Activated T-helper 1 cell treated with anti-CD3 and anti-CD28 coated beads, Interleukin-12 subunit alpha, Interleukin-12 subunit beta, Interleukin-2, Interleukin-4 antibody, amounts not matched to agents 30 ng/mL and 10 ng/mL and 1 ng/mL, durations not matched to agents 14 hours and 24 hours and 36 hours (primary cell): ENCODE measurements at regions of chr4 and their contacts with region 1.

Region 1: GRCh38 chr4:145055533-145056257 is 42.3 kb downstream of the ANAPC10 start:
- DNase-seq: no peak
- H3K4me3 Mint-ChIP-seq: no peak overlapping the region
- H3K27ac Mint-ChIP-seq: no peak overlapping the region
- H3K4me1 Mint-ChIP-seq: peaks cover 19% of the 10 kb centered on the region
- H3K27me3 Mint-ChIP-seq: no peaks in the 10 kb centered on the region

Region 2: DNA sequence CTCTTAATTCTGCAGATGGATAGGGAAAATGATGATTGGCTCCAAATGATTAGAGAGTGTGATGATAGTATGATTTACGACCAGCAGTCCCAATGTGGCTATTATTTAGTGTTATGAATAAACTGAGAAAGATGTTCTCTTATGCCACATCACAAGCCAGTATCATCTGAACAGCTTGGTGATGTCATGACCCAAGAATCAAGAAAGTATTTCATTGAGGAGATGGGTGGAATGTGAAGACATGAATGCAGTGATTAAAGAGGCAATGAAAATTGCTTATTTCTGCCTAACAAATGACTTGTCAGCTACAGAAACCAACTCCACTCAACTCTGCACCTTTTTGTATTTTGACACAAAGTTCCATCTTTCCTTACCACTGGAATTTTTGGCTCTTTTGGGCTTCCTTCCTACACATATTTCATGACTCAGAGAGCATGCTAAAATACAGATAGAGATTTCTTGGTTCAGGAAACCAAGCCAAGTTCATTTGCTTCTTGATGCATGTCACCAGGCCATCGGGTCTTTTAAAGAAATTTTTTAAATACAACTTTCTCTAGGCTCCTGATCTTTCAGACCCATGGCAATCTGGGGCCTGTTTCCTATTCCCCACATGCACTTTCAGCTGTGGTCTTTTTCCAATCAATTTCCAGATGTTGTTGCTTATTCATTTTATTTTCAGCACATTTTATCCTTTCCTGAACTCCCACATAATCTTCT is 235.5 kb before region 1 on chr4:
- intact Hi-C with region 1: no loop called
- DNase-seq: no peak
- H3K4me3 Mint-ChIP-seq: no peak overlapping the region
- H3K27ac Mint-ChIP-seq: no peak overlapping the region
- H3K4me1 Mint-ChIP-seq: no peaks in the 10 kb centered on the region
- H3K27me3 Mint-ChIP-seq: no peaks in the 10 kb centered on the region

Region 3: GRCh38 chr4:145019346-145019745 is 36.3 kb before region 1 on chr4:
- intact Hi-C with region 1: loop called (anchors 2 kb)
- DNase-seq: peak; percentile 3
- H3K4me3 Mint-ChIP-seq: peak overlapping the region; percentile 65
- H3K27ac Mint-ChIP-seq: peak overlapping the region; percentile 88
- H3K4me1 Mint-ChIP-seq: peaks cover 34% of the 10 kb centered on the region
- H3K27me3 Mint-ChIP-seq: no peaks in the 10 kb centered on the region

Region 4: DNA sequence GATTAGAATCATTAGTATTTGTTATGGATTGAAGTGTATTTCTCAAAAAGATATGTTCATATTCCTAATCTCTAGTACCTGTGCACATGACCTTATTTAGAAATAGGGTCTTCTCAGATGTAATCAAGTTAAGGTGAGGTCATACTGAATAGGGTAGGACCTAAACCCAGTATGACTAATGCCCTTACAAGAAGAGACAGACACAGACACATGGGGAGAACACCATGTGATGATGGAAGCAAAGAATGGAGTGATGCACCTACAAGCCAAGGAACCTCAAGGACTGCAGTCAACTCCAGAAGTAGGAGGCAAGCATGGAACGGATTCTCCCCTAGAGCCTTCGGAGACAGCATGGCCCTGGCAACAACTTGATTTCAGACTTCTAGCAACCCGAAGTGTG is 93.3 kb after region 1 on chr4:
- intact Hi-C with region 1: no loop called
- DNase-seq: no peak
- H3K4me3 Mint-ChIP-seq: no peak overlapping the region
- H3K27ac Mint-ChIP-seq: no peak overlapping the region
- H3K4me1 Mint-ChIP-seq: peaks cover 10% of the 10 kb centered on the region
- H3K27me3 Mint-ChIP-seq: no peaks in the 10 kb centered on the region

Region 5: DNA sequence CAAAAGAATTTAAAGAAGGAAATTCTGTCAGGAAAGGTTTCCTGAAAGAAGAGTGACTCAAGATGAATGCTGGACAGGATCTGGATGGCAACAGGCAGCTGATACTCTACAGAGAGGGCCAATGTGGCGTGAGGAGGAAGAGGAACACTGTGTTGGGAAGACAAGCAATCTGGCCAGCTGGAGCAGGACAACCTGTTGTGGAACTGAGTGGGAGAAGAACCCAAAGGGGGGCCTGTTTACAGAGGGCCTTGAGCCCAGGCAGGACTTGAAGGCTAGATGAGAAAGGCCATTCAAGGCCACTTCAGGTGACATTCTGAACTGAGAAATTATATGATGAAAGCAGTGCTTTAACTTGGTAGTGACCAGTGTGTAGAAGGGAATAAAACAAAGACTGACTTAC is 116.2 kb after region 1 on chr4:
- intact Hi-C with region 1: no loop called
- DNase-seq: no peak
- H3K4me3 Mint-ChIP-seq: no peak overlapping the region
- H3K27ac Mint-ChIP-seq: no peak overlapping the region
- H3K4me1 Mint-ChIP-seq: peaks cover 47% of the 10 kb centered on the region
- H3K27me3 Mint-ChIP-seq: no peaks in the 10 kb centered on the region

Region 6: DNA sequence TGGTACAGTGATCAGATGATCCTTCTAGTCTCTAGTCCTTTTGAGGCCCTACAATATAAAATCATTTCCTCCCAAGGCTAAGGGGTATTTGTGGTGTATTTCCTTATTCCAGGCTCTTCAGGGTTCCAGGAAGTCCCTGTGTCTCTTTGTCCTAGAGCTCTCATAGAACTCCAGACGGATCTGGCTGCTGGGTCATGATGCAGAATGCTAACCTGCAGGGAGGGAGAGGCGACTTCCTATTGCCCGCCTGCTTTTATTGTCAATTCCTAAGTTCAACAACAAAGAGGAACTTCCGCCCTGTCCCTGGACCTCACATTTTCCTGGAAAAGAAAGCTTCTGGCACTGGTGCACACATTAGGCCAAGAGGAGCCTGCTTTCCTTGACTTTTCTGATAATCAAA is 928.9 kb after region 1 on chr4:
- intact Hi-C with region 1: no loop called
- DNase-seq: no peak
- H3K4me3 Mint-ChIP-seq: no peak overlapping the region
- H3K27ac Mint-ChIP-seq: no peak overlapping the region
- H3K4me1 Mint-ChIP-seq: no peaks in the 10 kb centered on the region
- H3K27me3 Mint-ChIP-seq: peaks cover 4% of the 10 kb centered on the region